ENCODE measurements at regions of chr11 and their contacts with region 1.

Region 1: GRCh38 chr11:70270104-70270876 is at the start of gene PPFIA1:
- DNase-seq: peak; percentile 91
- ATAC-seq: peak; percentile 98
- H3K4me3 ChIP-seq: peak within 1 kb of the TSS; percentile 96
- H3K27ac ChIP-seq: peak within 1 kb of the TSS; percentile 75
- H3K4me1 ChIP-seq: peaks cover 4% of the 10 kb centered on the region; the same call in 1 of the 2 replicates
- H3K27me3 ChIP-seq: peaks cover 15% of the 10 kb centered on the region
- CTCF ChIP-seq: no peak
- POLR2A ChIP-seq: peak; percentile 96
- RAD21 ChIP-seq: no peak
- total RNA-seq, gene PPFIA1: 25.6 and 33.9 TPM in 2 replicates

Region 2: DNA sequence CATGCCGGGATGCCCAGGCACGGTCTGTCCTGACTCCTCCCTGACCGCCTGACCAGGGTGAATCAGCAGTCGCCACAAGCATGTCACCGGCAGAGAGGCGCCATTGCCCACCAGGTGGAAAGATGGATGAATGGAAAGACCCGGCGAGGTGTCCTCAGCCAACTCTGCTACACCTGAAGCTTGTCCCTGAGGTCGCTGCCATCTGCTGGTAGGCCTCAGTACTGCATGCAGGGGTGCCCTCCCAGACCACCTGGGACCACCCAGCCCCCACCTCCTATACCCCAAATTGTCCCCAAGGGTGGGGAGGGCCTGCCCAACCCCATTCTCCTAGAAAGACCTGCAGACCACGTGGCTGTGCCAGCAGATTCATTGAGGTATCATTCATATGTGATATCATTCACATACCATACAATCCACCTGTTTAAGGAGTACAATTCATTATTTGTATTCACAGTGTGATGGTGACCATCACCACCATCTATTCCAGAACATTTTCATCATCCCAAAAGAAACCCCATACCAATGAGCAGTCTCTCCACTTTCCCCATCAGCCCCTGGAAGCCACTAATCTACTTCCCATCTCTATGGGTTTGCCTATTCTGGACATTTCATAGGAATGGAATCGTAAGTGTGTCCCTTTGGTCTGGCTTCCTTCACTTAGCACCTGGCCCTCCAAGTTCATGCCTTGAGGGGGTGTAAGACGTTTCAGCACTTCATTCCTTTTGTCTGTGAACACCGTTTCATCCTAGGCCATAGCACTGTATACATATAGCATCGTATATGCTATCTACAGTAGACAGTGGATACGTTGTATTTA is 468.6 kb before region 1 on chr11:
- CTCF ChIA-PET with region 1: no interaction called
- POLR2A ChIA-PET with region 1: no interaction called
- dilution Hi-C with region 1: no loop called
- in situ Hi-C with region 1: no loop called
- intact Hi-C with region 1: no loop called
- DNase-seq: no peak
- ATAC-seq: peak; percentile 62
- H3K4me3 ChIP-seq: no peak overlapping the region
- H3K27ac ChIP-seq: no peak overlapping the region
- H3K4me1 ChIP-seq: no peaks in the 10 kb centered on the region
- H3K27me3 ChIP-seq: peaks cover 29% of the 10 kb centered on the region
- CTCF ChIP-seq: peak; percentile 63
- POLR2A ChIP-seq: no peak
- RAD21 ChIP-seq: peak; percentile 55

Region 3: GRCh38 chr11:70397983-70398833 is 127.9 kb after region 1 on chr11 and contains the start of gene CTTN:
- CTCF ChIA-PET with region 1: interaction called, 4 read pairs
- POLR2A ChIA-PET with region 1: no interaction called
- dilution Hi-C with region 1: no loop called
- in situ Hi-C with region 1: no loop called
- intact Hi-C with region 1: loop called (anchors 5 kb)
- DNase-seq: peak; percentile 85
- ATAC-seq: peak; percentile 85
- H3K4me3 ChIP-seq: peak within 1 kb of the TSS; percentile 81
- H3K27ac ChIP-seq: peak within 1 kb of the TSS; percentile 99
- H3K4me1 ChIP-seq: peaks cover 14% of the 10 kb centered on the region
- H3K27me3 ChIP-seq: no peaks in the 10 kb centered on the region
- CTCF ChIP-seq: no peak
- POLR2A ChIP-seq: peak; percentile 89
- RAD21 ChIP-seq: 0 out of 2 replicates have a peak, but pooled peaks have one; percentile 3
- total RNA-seq, gene CTTN: 287 and 341 TPM in 2 replicates

Region 4: DNA sequence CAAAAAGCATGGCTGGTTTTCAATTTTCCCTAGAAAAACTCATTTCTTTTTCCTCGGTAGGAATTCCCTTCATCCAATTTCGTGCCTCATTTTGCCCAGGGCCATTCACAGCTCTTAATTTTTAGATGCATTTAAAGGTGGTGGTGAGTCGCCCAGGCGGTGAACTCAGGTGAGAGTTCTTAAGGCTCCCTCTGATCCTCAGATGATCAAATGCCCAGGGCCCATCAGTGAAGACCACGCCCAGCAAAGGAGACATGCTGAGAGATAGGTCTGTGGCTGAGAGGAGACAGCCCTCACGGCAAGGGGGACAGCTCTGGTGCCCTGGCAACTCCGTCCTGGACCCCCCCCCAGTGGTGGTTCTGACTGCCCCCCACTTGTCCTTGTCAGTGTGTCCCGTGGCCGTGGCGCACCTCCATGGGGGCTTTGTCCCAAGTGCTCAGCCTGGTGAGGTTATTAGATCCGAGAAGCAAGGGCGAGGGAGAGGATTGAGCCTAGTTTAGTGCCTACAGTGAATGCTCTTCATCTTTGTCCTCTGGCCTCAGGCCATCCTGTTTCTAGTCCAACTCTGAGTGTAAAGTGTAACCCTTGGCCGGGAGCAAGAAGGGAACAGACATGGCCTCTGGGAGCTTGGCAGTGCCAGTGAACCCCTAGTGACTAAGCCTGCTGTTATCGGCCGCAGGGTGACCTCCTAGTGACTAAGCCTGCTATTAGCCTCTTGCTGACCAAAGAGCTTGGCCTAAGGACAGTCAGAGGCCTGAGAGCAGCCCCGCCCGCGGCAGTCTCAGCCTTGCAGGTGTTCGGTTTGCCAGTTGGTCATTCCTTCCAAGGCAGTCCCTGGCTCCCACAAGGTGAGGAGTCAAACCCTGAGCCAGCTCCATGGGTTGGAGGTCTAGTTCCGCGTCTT is 211.6 kb after region 1 on chr11:
- CTCF ChIA-PET with region 1: no interaction called
- POLR2A ChIA-PET with region 1: no interaction called
- dilution Hi-C with region 1: no loop called
- in situ Hi-C with region 1: no loop called
- intact Hi-C with region 1: no loop called
- DNase-seq: peak; percentile 63
- ATAC-seq: peak; percentile 75
- H3K4me3 ChIP-seq: no peak overlapping the region
- H3K27ac ChIP-seq: no peak overlapping the region
- H3K4me1 ChIP-seq: peaks cover 7% of the 10 kb centered on the region
- H3K27me3 ChIP-seq: peaks cover 2% of the 10 kb centered on the region; the same call in 1 of the 2 replicates
- CTCF ChIP-seq: no peak
- POLR2A ChIP-seq: no peak
- RAD21 ChIP-seq: no peak